Activated CD4-positive, alpha-beta T cell treated with anti-CD3 and anti-CD28 coated beads, Interleukin-2, amount 10 ng/mL, durations not matched to agents 24 days and 14 days (primary cell): ENCODE measurements at regions of chr9 and their contacts with region 1.

Region 1: DNA sequence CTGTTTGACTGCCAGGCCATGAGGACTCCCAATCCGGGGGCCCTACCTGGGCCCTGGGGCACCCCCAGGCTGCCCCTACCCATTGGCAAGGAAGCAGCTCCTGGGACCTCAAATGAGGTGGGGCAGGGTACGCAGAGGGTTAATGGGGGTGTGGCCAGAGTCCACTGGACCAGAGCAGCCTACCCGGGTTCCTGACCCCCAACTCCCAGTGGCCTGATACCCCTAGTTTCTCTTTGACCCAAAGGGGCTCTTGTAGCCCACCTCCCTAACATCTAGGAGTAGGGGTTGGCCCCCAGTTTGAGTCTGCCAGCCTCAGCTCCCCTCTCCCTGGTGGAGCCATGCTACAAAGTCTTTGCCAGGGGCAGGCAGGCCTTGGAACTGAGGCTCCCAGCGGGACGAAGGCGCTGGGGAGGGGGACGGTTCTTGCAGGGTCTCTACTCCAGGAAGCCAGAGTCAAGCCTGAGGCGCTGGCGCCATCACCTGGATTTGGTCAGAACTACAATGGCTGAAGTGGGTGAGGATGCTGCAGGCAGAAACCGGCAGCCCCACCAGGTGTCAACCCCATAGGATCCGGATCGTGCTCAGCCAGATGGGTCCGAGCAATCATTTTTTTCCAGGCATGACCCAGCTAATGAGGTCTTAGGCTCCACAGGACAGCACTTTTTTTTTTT is 8.4 kb upstream of the CERCAM start:
- DNase-seq: peak; percentile 89
- H3K4me3 Mint-ChIP-seq: no peak overlapping the region
- H3K27ac Mint-ChIP-seq: no peak overlapping the region
- H3K4me1 Mint-ChIP-seq: peaks cover 3% of the 10 kb centered on the region
- H3K27me3 Mint-ChIP-seq: peaks cover 45% of the 10 kb centered on the region

Region 2: GRCh38 chr9:128296337-128297220 is 115.7 kb before region 1 on chr9:
- intact Hi-C with region 1: loop called (anchors 2 kb)
- DNase-seq: no peak
- H3K4me3 Mint-ChIP-seq: no peak overlapping the region
- H3K27ac Mint-ChIP-seq: no peak overlapping the region
- H3K4me1 Mint-ChIP-seq: no peaks in the 10 kb centered on the region
- H3K27me3 Mint-ChIP-seq: no peaks in the 10 kb centered on the region

Region 3: GRCh38 chr9:128361986-128362646 is 50.1 kb before region 1 on chr9:
- intact Hi-C with region 1: loop called (anchors 5 kb)
- DNase-seq: peak; percentile 91
- H3K4me3 Mint-ChIP-seq: peak overlapping the region; percentile 85
- H3K27ac Mint-ChIP-seq: peak overlapping the region; percentile 79
- H3K4me1 Mint-ChIP-seq: peaks cover 16% of the 10 kb centered on the region
- H3K27me3 Mint-ChIP-seq: no peaks in the 10 kb centered on the region